ENCODE measurements at regions of chr10 and their contacts with region 1.

Region 1: GRCh38 chr10:124626759-124627380 is 117.3 kb downstream of the FAM53B start:
- DNase-seq: no peak
- H3K4me3 ChIP-seq: no peak overlapping the region
- H3K27ac ChIP-seq: no peak overlapping the region
- H3K4me1 ChIP-seq: peaks cover 0 to 23% of the 10 kb centered on the region in 2 donors
- H3K27me3 ChIP-seq: no peaks in the 10 kb centered on the region
- CTCF ChIP-seq: no peak
- POLR2A ChIP-seq: no peak

Region 2: DNA sequence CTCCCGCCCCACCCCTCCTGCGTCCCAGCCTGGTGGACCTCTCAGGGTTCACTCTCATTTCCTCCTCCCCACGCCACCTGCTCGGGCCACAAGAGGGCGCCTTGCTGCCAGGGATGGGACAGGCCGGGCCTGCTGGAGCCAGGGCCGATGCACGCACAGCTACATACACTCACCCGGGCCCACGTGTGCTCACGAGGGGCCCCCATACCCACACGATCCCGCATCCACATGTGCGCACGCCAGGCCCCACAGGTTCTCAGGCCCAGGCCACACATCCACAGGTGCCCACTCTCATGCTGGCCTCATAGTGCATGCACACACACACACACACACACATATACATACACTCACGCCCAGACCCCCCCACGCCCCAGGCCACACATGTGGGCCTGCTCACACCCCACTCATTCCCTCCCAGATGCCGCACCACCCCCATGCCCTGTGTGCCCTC is 96.6 kb before region 1 on chr10:
- intact Hi-C with region 1: loop called (anchors 10 kb)
- DNase-seq: peak; percentile 87
- H3K4me3 ChIP-seq: no peak overlapping the region
- H3K27ac ChIP-seq: no peak overlapping the region
- H3K4me1 ChIP-seq: no peaks in the 10 kb centered on the region
- H3K27me3 ChIP-seq: no peaks in the 10 kb centered on the region
- CTCF ChIP-seq: peak; percentile 89 to 95 (median 90)
- POLR2A ChIP-seq: no peak

Region 3: DNA sequence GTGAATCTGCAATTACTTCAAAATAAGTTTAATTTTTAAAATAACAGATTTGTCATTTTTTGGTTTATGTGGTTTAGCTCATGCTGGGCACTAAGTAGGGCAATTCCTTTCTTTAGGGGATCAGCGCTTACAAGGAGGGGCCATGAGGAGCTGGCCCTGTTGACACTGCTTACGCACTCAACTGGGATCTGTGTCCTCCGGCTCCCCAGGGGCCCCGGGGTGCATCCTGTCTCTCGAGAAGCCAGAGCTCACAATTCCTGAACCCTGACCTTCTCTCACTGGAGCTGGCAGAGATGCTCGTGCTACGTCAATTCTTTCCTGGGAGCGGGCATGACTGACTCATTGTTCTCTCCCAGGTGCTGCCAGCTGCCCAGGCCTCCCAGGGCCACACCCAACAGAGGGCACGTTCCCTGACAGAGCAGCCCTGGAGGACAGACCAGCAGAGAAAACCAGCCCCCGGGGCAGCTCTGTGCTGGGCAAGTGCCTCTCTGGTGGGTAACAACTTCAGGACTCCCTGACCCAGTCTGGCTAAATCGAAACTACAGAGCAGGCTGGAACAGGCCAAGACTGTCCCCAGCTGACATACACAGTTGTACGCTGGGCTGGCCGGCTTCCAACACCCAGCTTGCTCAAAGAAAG is 496.7 kb after region 1 on chr10:
- intact Hi-C with region 1: no loop called
- DNase-seq: peak; percentile 70 to 73
- H3K4me3 ChIP-seq: peak overlapping the region in 1 of 2 donors; percentile 7
- H3K27ac ChIP-seq: peak overlapping the region; percentile 64 to 75
- H3K4me1 ChIP-seq: peaks cover 13 to 19% of the 10 kb centered on the region in 2 donors
- H3K27me3 ChIP-seq: no peaks in the 10 kb centered on the region
- CTCF ChIP-seq: no peak
- POLR2A ChIP-seq: no peak

Measured in uterus (tissue), 4 donors.